Heart right ventricle (tissue), 16 donors: ENCODE measurements at regions of chr2 and their contacts with region 1.

Region 1: GRCh38 chr2:66536997-66537396 is 102.1 kb downstream of the MEIS1 start:
- DNase-seq: peak in 1 of 2 donors; percentile 19
- ATAC-seq: peak in 7 of 8 donors; percentile 41 to 92 (median 70)
- H3K4me3 ChIP-seq: no peak overlapping the region
- H3K27ac ChIP-seq: peak overlapping the region in 3 of 10 donors; percentile 13 to 23 (median 21)
- H3K4me1 ChIP-seq: peaks cover 0 to 42% (median 20%) of the 10 kb centered on the region in 9 donors
- H3K27me3 ChIP-seq: no peaks in the 10 kb centered on the region
- CTCF ChIP-seq: no peak

Region 2: GRCh38 chr2:66507673-66508201 is 29.3 kb before region 1 on chr2:
- intact Hi-C with region 1: loop called in 1 of 10 experiments (anchors 1 kb)
- DNase-seq: no peak
- ATAC-seq: peak in 7 of 8 donors; percentile 65 to 84 (median 78)
- H3K4me3 ChIP-seq: no peak overlapping the region
- H3K27ac ChIP-seq: peak overlapping the region in 8 of 10 donors; percentile 15 to 71 (median 48)
- H3K4me1 ChIP-seq: peaks cover 5 to 44% (median 22%) of the 10 kb centered on the region in 9 donors
- H3K27me3 ChIP-seq: no peaks in the 10 kb centered on the region
- CTCF ChIP-seq: no peak

Region 3: DNA sequence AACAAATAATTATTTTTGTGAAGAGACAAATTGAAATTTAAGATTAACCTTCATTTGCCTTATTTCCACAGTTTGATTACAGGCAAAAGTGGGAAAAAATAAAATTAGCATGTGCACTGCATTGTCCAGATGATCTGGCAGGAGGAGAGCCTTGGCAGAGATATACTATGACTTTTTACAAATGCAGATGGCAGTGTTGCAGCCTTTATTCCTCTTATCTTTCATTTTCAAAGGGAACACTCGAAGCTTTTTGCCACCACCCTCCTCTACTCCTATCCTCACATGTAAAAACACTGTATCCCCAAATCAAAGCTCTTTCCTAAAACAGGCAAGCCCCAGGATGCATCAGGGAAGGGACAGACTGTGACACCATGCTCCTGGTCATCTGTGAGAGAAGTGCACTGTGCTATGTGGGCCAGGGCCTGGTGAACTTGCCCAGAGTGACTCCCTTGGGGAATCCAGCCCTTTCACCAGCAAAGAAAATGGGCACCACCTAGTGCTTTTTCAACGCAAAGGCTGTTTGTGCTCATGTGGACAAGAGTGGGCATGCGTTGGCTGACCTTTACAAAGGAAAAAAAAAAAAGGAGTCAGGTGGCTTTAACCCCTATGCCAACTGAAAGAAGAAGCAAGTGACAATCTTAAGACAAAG is 785.5 kb after region 1 on chr2:
- intact Hi-C with region 1: loop called in 1 of 10 experiments (anchors 5 kb)
- DNase-seq: peak in 1 of 2 donors; percentile 20
- ATAC-seq: peak; percentile 43 to 88 (median 78)
- H3K4me3 ChIP-seq: no peak overlapping the region
- H3K27ac ChIP-seq: no peak overlapping the region
- H3K4me1 ChIP-seq: peaks cover 0 to 9% (median 4%) of the 10 kb centered on the region in 9 donors
- H3K27me3 ChIP-seq: peaks cover 0 to 15% (median 5%) of the 10 kb centered on the region in 7 donors
- CTCF ChIP-seq: peak in 5 of 9 donors; percentile 10 to 45 (median 33)